Breast epithelium (tissue), 4 donors: ENCODE measurements at regions of chr14 and their contacts with region 1.

Region 1: DNA sequence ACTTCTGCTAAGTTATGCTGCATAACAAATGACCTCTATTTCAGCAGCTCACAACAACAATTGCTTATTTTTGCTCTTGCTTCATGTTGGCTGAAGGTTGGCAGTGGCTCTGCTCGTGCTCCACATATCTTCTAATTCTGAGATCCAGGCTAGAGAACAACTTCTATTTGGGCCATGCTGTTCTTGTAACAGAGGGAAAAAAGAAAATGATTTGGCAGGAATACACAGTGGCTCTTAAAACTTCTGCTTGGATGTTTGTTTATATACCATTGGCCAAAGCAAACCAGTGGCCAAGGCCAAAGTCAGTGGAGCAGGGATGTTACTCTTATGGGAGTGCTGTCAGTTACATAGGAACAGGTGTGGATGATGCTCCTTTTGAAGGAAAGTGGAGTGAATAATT is 32.1 kb downstream of the GPHN start:
- DNase-seq: no peak
- H3K4me3 ChIP-seq: no peak overlapping the region
- H3K27ac ChIP-seq: no peak overlapping the region
- H3K4me1 ChIP-seq: no peaks in the 10 kb centered on the region
- H3K27me3 ChIP-seq: no peaks in the 10 kb centered on the region
- CTCF ChIP-seq: no peak
- POLR2A ChIP-seq: no peak

Region 2: GRCh38 chr14:66476964-66477363 is 63.1 kb before region 1 on chr14:
- intact Hi-C with region 1: no loop called
- DNase-seq: no peak
- H3K4me3 ChIP-seq: no peak overlapping the region
- H3K27ac ChIP-seq: no peak overlapping the region
- H3K4me1 ChIP-seq: no peaks in the 10 kb centered on the region
- H3K27me3 ChIP-seq: no peaks in the 10 kb centered on the region
- CTCF ChIP-seq: no peak
- POLR2A ChIP-seq: no peak

Region 3: DNA sequence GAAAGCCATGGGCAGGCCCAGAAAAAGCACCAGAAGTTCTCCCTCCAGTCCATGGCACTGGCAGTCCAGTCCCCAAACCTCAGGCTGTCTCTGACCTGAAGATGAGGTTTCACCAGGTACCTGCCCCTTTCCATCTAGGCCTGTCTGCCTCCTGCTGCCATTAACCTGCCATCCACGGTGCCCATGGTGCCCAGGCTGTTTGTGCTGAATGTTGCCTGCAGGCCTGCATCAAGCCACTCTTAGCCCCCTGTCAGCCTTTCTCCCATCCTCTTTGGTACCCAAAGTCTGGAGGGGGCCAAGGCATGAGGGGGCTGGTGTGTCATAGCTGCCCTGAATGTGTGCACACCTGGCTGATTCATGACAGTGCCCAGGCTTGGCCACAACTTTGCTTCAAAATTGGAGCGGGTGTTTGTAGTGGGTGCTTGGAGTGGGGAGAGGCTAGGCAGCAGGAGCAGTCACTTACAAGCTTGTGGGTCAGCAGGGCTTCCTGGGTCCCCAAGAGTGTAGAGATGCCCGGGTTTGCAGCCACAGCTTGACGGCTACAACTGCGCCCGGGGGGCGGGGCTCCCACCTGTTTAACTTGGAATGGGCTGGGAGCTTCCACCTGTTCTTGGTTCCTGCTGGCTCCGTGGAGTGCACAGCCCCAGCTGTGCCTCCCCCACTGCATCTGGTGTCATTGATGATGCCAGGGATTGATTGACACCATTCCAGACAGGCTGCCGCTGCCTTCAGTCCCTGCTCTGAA is 56.4 kb after region 1 on chr14:
- intact Hi-C with region 1: no loop called
- DNase-seq: no peak
- H3K4me3 ChIP-seq: no peak overlapping the region
- H3K27ac ChIP-seq: no peak overlapping the region
- H3K4me1 ChIP-seq: no peaks in the 10 kb centered on the region
- H3K27me3 ChIP-seq: no peaks in the 10 kb centered on the region
- CTCF ChIP-seq: no peak
- POLR2A ChIP-seq: no peak

Region 4: DNA sequence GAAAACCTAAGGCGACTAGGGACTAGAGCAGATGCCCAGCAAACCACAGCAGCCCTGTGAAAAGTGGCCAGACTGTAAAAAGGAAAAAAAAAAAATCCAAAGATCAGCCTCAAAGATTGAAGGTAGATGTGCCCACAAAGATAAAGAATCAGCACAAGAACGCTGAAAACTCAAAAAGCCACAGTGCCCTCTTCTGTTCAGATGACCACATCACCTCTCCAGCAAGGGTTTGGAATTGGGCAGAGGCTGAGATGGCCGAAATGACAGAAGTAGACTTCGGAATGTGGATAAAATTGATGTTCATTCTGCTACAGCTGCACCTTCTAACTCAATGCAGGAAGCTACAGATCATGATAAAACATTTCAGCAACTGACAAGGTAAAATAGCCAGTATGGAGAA is 122.3 kb after region 1 on chr14:
- intact Hi-C with region 1: no loop called
- DNase-seq: no peak
- H3K4me3 ChIP-seq: no peak overlapping the region
- H3K27ac ChIP-seq: no peak overlapping the region
- H3K4me1 ChIP-seq: no peaks in the 10 kb centered on the region
- H3K27me3 ChIP-seq: no peaks in the 10 kb centered on the region
- CTCF ChIP-seq: no peak
- POLR2A ChIP-seq: no peak

Region 5: GRCh38 chr14:66920196-66920595 is 380.2 kb after region 1 on chr14:
- intact Hi-C with region 1: loop called (anchors 10 kb)
- DNase-seq: no peak
- H3K4me3 ChIP-seq: no peak overlapping the region
- H3K27ac ChIP-seq: no peak overlapping the region
- H3K4me1 ChIP-seq: no peaks in the 10 kb centered on the region
- H3K27me3 ChIP-seq: no peaks in the 10 kb centered on the region
- CTCF ChIP-seq: no peak
- POLR2A ChIP-seq: no peak

Region 6: GRCh38 chr14:68487805-68488590 is 1948.0 kb after region 1 on chr14:
- intact Hi-C with region 1: no loop called
- DNase-seq: no peak
- H3K4me3 ChIP-seq: no peak overlapping the region
- H3K27ac ChIP-seq: peak overlapping the region in 1 of 2 donors; percentile 30
- H3K4me1 ChIP-seq: no peaks in the 10 kb centered on the region
- H3K27me3 ChIP-seq: no peaks in the 10 kb centered on the region
- CTCF ChIP-seq: no peak
- POLR2A ChIP-seq: no peak